Naive thymus-derived CD4-positive, alpha-beta T cell (primary cell): ENCODE measurements at regions of chr1 and their contacts with region 1.

Region 1: GRCh38 chr1:28552758-28553663 is at the start of gene TRNAU1AP:
- DNase-seq: peak; percentile 92 to 98 (median 97)
- ATAC-seq: peak; percentile 98
- H3K4me3 ChIP-seq: peak within 1 kb of the TSS; percentile 95
- H3K4me3 Mint-ChIP-seq: peak within 1 kb of the TSS; percentile 94 to 99 (median 98)
- H3K27ac ChIP-seq: peak within 1 kb of the TSS; percentile 81
- H3K27ac Mint-ChIP-seq: peak within 1 kb of the TSS; percentile 94 to 99 (median 98)
- H3K4me1 ChIP-seq: peaks cover 0 to 15% of the 10 kb centered on the region in 2 donors
- H3K4me1 Mint-ChIP-seq: peaks cover 10 to 26% (median 19%) of the 10 kb centered on the region in 7 donors
- H3K27me3 ChIP-seq: no peaks in the 10 kb centered on the region
- H3K27me3 Mint-ChIP-seq: no peaks in the 10 kb centered on the region
- total RNA-seq, gene TRNAU1AP: 27.6 to 52.5 (median 40.9) TPM

Region 2: GRCh38 chr1:27772933-27773825 is 779.8 kb before region 1 on chr1 and contains the start of gene STX12:
- CTCF ChIA-PET with region 1: no interaction called
- POLR2A ChIA-PET with region 1: no interaction called
- intact Hi-C with region 1: loop called in 1 of 2 experiments (anchors 2 kb)
- DNase-seq: peak; percentile 97 to 100 (median 98)
- ATAC-seq: peak; percentile 96
- H3K4me3 ChIP-seq: peak within 1 kb of the TSS; percentile 97
- H3K4me3 Mint-ChIP-seq: peak within 1 kb of the TSS; percentile 84 to 97 (median 94)
- H3K27ac ChIP-seq: peak within 1 kb of the TSS; percentile 94
- H3K27ac Mint-ChIP-seq: peak within 1 kb of the TSS; percentile 90 to 99 (median 96)
- H3K4me1 ChIP-seq: peaks cover 10 to 13% of the 10 kb centered on the region in 2 donors
- H3K4me1 Mint-ChIP-seq: peaks cover 26 to 43% (median 37%) of the 10 kb centered on the region in 7 donors
- H3K27me3 ChIP-seq: no peaks in the 10 kb centered on the region
- H3K27me3 Mint-ChIP-seq: no peaks in the 10 kb centered on the region
- total RNA-seq, gene STX12: 23.9 to 38.7 (median 28.9) TPM

Region 3: GRCh38 chr1:28259307-28260167 is 293.5 kb before region 1 on chr1 and contains the start of gene SESN2:
- CTCF ChIA-PET with region 1: no interaction called
- POLR2A ChIA-PET with region 1: no interaction called
- intact Hi-C with region 1: loop called in 1 of 2 experiments (anchors 1 kb)
- DNase-seq: peak; percentile 97 to 99 (median 99)
- ATAC-seq: peak; percentile 98
- H3K4me3 ChIP-seq: peak within 1 kb of the TSS; percentile 95
- H3K4me3 Mint-ChIP-seq: peak within 1 kb of the TSS; percentile 65 to 90 (median 82)
- H3K27ac ChIP-seq: peak within 1 kb of the TSS; percentile 77
- H3K27ac Mint-ChIP-seq: peak within 1 kb of the TSS; percentile 58 to 96 (median 74)
- H3K4me1 ChIP-seq: peaks cover 38 to 47% of the 10 kb centered on the region in 2 donors
- H3K4me1 Mint-ChIP-seq: peaks cover 32 to 54% (median 49%) of the 10 kb centered on the region in 7 donors
- H3K27me3 ChIP-seq: no peaks in the 10 kb centered on the region
- H3K27me3 Mint-ChIP-seq: peaks cover 0 to 2% (median 0%) of the 10 kb centered on the region in 5 donors
- total RNA-seq, gene SESN2: 4.5 to 50.7 (median 11.8) TPM

Region 4: DNA sequence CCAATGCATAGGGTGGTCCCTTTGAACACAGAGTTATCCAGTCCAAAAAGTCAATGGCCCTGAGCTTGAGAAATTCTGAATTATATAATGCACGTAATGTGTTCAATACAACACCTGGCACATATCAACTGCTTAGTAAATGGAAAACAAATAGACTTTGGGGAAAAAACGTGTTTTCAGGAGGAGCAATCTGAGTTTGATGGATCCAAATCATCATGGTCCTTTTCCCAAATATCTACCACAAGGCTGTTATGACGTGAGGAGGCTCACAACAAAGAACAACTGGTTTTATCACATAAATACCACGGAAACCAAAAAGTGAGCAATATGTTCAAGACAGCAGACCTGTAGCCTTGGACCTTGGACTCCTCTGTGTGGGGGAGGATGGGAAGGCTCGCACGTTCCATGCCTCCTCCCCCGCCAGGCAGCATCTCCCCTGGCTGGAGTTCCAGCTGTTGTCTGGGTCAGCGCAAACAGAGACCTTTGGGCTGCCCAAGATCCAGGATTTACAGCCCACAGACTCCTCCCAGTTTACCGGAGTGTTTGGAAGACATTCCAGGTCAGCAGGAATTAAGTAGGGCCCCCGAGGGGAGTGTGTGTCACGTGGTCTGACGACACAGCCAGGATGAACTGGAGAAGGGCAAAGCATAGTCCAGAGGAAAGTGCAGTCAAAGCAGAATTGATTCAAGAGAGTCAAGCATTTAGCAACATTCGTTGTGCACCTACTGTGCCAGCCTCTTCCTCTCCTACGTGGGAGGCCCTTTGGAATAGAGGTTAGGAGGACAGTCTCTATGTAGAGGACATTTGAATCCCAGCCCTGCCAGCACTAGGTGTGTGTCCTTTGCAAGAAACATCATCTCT is 256.4 kb before region 1 on chr1:
- CTCF ChIA-PET with region 1: no interaction called
- POLR2A ChIA-PET with region 1: no interaction called
- intact Hi-C with region 1: no loop called
- DNase-seq: no peak
- ATAC-seq: no peak
- H3K4me3 ChIP-seq: no peak overlapping the region
- H3K4me3 Mint-ChIP-seq: no peak overlapping the region
- H3K27ac ChIP-seq: no peak overlapping the region
- H3K27ac Mint-ChIP-seq: no peak overlapping the region
- H3K4me1 ChIP-seq: no peaks in the 10 kb centered on the region
- H3K4me1 Mint-ChIP-seq: peaks cover 0 to 12% (median 0%) of the 10 kb centered on the region in 7 donors
- H3K27me3 ChIP-seq: no peaks in the 10 kb centered on the region
- H3K27me3 Mint-ChIP-seq: peaks cover 0 to 7% (median 4%) of the 10 kb centered on the region in 5 donors

Region 5: DNA sequence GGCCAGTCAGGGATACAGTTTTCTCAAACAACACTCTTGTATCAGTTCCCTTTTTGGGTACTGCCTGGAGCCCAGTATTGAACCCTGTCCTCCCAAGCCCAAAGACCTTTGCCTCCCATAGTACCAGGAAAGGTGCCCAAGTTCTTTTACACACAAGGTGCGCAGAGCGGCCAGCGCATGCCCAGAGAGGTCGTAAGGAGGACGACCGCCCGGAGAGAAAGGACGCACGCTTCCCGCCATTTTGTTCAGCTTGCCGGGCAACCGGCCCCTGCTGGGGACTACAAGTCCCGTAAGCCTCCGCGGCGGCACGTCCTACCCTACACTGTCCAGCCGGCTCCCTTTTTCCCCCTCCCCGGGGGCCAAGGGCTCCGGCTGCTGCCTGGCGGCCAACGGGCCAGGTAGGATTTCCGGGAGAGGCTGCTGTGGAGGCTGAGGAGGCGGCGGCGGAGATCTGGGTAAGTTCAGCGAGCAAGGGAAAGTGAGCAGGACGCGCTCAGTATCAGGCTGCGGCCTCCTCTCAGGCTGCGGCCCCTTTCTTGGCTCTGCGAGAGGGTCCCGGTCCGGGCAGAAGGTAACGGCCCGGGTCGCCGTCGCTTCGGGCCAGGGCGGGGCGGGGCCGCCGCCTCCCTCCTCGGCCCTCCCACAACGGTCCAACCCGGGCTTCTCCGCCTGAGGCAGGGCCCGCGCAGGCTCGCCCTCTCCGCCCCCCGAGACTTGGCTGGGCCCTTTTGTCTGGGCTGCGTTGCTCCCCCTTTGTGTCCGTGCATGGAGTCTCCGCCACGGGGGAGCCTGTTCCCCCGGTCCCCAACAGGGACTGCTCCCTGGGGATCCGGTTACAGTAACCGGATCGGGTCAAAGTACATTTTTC is 183.4 kb before region 1 on chr1 and contains the start of gene PHACTR4:
- CTCF ChIA-PET with region 1: no interaction called
- POLR2A ChIA-PET with region 1: interaction called, 3 read pairs
- intact Hi-C with region 1: loop called in 1 of 2 experiments (anchors 1 kb)
- DNase-seq: peak; percentile 54 to 81 (median 66)
- ATAC-seq: peak; percentile 96
- H3K4me3 ChIP-seq: peak within 1 kb of the TSS; percentile 74
- H3K4me3 Mint-ChIP-seq: peak within 1 kb of the TSS; percentile 82 to 98 (median 94)
- H3K27ac ChIP-seq: peak within 1 kb of the TSS; percentile 79
- H3K27ac Mint-ChIP-seq: peak within 1 kb of the TSS; percentile 88 to 99 (median 91)
- H3K4me1 ChIP-seq: peaks cover 10 to 11% of the 10 kb centered on the region in 2 donors
- H3K4me1 Mint-ChIP-seq: peaks cover 11 to 40% (median 35%) of the 10 kb centered on the region in 7 donors
- H3K27me3 ChIP-seq: no peaks in the 10 kb centered on the region
- H3K27me3 Mint-ChIP-seq: peaks cover 0 to 2% (median 0%) of the 10 kb centered on the region in 5 donors
- total RNA-seq, gene PHACTR4: 19.8 to 29.0 (median 25.7) TPM

Region 6: DNA sequence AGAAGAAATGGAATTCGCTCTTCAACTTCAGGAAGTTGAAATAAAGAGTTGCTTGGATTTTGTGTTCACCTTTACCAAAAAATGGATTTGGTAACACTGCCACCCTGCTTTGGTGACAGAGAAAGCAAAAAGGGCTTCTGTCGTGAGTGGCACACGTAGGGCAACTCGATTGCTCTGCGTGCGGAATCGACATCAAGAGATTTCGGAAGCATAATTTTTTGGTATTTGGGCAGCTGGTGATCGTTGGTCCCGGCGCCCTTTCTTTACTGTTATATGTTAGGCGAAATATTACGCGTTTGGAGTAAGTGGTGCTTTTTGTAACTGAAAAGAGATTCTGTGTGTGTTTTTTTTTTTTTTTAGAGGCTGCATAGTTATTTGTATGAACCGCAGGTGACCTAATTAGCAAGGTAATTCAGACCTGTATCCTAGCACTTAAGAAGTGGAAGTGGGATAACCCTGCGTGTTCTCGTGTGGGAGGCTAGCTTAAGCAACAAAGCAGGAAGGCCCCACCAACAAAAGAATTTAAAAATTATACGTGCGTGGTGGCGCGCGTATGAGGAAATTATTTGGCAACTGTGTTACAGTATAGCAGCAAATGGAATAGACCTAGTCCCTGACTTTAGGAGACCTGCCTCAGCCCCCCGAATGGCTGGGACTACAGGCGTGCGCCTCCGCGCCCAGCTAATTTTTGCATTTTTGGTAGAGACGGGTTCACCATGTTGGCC is 95.6 kb after region 1 on chr1 and contains the start of gene RNU11:
- CTCF ChIA-PET with region 1: no interaction called
- POLR2A ChIA-PET with region 1: interaction called, 8 read pairs
- intact Hi-C with region 1: loop called in 1 of 2 experiments (anchors 1 kb)
- DNase-seq: peak in 8 of 9 donors; percentile 67 to 97 (median 91)
- ATAC-seq: peak; percentile 86
- H3K4me3 ChIP-seq: peak within 1 kb of the TSS; percentile 60
- H3K4me3 Mint-ChIP-seq: peak within 1 kb of the TSS; percentile 70 to 96 (median 90)
- H3K27ac ChIP-seq: peak within 1 kb of the TSS; percentile 93
- H3K27ac Mint-ChIP-seq: peak within 1 kb of the TSS; percentile 97 to 100 (median 99)
- H3K4me1 ChIP-seq: peaks cover 25 to 27% of the 10 kb centered on the region in 2 donors
- H3K4me1 Mint-ChIP-seq: peaks cover 14 to 39% (median 31%) of the 10 kb centered on the region in 7 donors
- H3K27me3 ChIP-seq: no peaks in the 10 kb centered on the region
- H3K27me3 Mint-ChIP-seq: no peaks in the 10 kb centered on the region
- total RNA-seq, gene RNU11: not detected